ENCODE measurements at regions of chr5 and their contacts with region 1.

Region 1: DNA sequence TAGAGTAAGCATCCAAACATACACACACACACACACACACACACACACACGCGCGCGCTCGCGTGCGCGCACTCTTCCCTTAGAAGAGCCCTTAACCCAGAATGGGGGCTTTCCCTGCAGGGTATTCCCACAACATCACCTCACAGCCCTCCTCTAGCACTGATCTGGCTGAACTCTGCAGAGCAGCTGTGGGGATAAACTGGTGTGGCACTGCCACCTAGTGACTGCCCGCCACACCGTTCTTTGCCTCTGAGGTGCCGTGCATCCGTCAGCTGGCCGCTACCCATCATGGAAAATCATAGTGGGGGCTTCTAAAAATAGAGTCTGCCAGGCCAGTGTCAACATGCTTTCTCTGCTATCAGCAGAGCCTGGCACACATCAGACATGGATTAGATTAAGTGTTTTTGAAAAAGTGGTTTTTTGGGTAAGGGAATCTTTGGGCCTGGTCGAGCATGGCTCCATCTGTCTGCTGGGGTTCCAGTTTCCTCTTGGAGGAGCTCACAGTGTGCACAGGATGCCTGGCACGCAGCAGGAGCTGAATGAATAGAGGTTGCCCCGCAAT is 88.1 kb downstream of the KCNN2 start:
- DNase-seq: peak; percentile 77 to 92 (median 82)
- H3K4me3 ChIP-seq: no peak overlapping the region
- H3K27ac ChIP-seq: peak overlapping the region in 3 of 5 donors; percentile 40 to 73 (median 47)
- H3K4me1 ChIP-seq: peaks cover 0 to 29% of the 10 kb centered on the region in 2 donors
- H3K27me3 ChIP-seq: no peaks in the 10 kb centered on the region
- CTCF ChIP-seq: peak; percentile 57 to 88 (median 80)
- POLR2A ChIP-seq: no peak

Region 2: GRCh38 chr5:113682503-113683136 is 767.3 kb before region 1 on chr5:
- intact Hi-C with region 1: loop called in 1 of 2 experiments (anchors 10 kb)
- DNase-seq: no peak
- H3K4me3 ChIP-seq: no peak overlapping the region
- H3K27ac ChIP-seq: no peak overlapping the region
- H3K4me1 ChIP-seq: no peaks in the 10 kb centered on the region
- H3K27me3 ChIP-seq: no peaks in the 10 kb centered on the region
- CTCF ChIP-seq: peak in 2 of 6 experiments; percentile 10
- POLR2A ChIP-seq: no peak

Region 3: GRCh38 chr5:114101153-114101552 is 348.8 kb before region 1 on chr5:
- intact Hi-C with region 1: loop called in 1 of 2 experiments (anchors 10 kb)
- DNase-seq: peak; percentile 20 to 57 (median 41)
- H3K4me3 ChIP-seq: no peak overlapping the region
- H3K27ac ChIP-seq: no peak overlapping the region
- H3K4me1 ChIP-seq: no peaks in the 10 kb centered on the region
- H3K27me3 ChIP-seq: no peaks in the 10 kb centered on the region
- CTCF ChIP-seq: peak; percentile 31 to 73 (median 52)
- POLR2A ChIP-seq: no peak

Region 4: DNA sequence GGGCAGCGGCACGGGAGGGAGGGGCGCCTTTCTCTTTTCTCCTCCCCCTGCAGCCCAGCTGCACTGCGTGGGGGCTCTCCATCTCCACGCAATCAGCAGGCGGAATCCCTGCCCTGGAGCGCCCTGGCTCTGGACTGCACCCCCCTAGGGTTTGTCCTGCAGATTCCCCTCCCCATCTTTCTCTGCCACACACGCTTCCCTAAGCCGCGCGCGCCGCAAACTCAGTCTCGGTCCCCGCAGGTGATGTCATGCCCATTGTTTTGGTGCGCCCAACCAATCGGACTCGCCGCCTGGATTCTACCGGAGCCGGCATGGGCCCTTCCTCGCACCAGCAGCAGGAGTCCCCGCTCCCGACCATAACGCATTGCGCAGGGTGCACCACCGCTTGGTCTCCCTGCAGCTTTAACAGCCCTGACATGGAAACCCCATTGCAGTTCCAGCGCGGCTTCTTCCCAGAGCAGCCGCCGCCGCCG is 88.2 kb before region 1 on chr5 and contains the start of gene KCNN2:
- intact Hi-C with region 1: loop called in 1 of 2 experiments (anchors 5 kb)
- DNase-seq: peak; percentile 94 to 97 (median 96)
- H3K4me3 ChIP-seq: peak within 1 kb of the TSS; percentile 43 to 84 (median 57)
- H3K27ac ChIP-seq: peak within 1 kb of the TSS in 4 of 5 donors; percentile 54 to 81 (median 72)
- H3K4me1 ChIP-seq: peaks cover 9 to 30% of the 10 kb centered on the region in 2 donors
- H3K27me3 ChIP-seq: peaks cover 6% of the 10 kb centered on the region
- CTCF ChIP-seq: no peak
- POLR2A ChIP-seq: peak in 1 of 2 donors; percentile 81
- total RNA-seq, gene KCNN2: 18.5 to 62.7 (median 43.7) TPM

Region 5: DNA sequence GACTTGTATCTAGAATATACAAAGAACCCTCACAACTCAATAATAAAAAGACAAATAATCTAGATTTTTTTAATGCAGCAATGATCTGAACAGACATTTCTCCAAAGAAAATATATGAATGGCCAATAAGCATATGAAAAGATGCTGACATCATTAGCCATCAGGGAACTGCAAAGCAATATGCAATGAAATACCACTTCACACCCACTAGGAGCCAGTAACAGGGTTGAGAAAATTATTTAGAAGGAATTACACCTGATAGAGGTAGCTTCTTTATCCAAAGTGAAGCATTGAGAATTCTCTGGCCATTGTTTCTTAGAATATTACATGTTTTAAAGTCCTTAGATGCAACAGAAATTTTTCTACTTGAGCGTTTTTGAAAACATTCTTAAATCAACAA is 228.8 kb after region 1 on chr5:
- intact Hi-C with region 1: no loop called
- DNase-seq: no peak
- H3K4me3 ChIP-seq: no peak overlapping the region
- H3K27ac ChIP-seq: no peak overlapping the region
- H3K4me1 ChIP-seq: no peaks in the 10 kb centered on the region
- H3K27me3 ChIP-seq: no peaks in the 10 kb centered on the region
- CTCF ChIP-seq: no peak
- POLR2A ChIP-seq: no peak

Measured in adrenal gland (tissue), 19 donors.